Activated T-helper 1 cell treated with anti-CD3 and anti-CD28 coated beads, Interleukin-12 subunit alpha, Interleukin-12 subunit beta, Interleukin-2, Interleukin-4 antibody, amounts not matched to agents 30 ng/mL and 10 ng/mL and 1 ng/mL, durations not matched to agents 14 hours and 24 hours and 36 hours (primary cell): ENCODE measurements at regions of chr21 and their contacts with region 1.

Region 1: GRCh38 chr21:14773777-14774345 is 227.7 kb upstream of the SAMSN1 start:
- DNase-seq: peak; percentile 45
- H3K4me3 Mint-ChIP-seq: no peak overlapping the region
- H3K27ac Mint-ChIP-seq: no peak overlapping the region
- H3K4me1 Mint-ChIP-seq: no peaks in the 10 kb centered on the region
- H3K27me3 Mint-ChIP-seq: peaks cover 2% of the 10 kb centered on the region

Region 2: GRCh38 chr21:14259747-14260146 is 514.1 kb before region 1 on chr21:
- intact Hi-C with region 1: loop called (anchors 10 kb)
- DNase-seq: no peak
- H3K4me3 Mint-ChIP-seq: no peak overlapping the region
- H3K27ac Mint-ChIP-seq: no peak overlapping the region
- H3K4me1 Mint-ChIP-seq: no peaks in the 10 kb centered on the region
- H3K27me3 Mint-ChIP-seq: peaks cover 10% of the 10 kb centered on the region

Region 3: GRCh38 chr21:14403681-14404318 is 370.1 kb before region 1 on chr21:
- intact Hi-C with region 1: loop called (anchors 1 kb)
- DNase-seq: no peak
- H3K4me3 Mint-ChIP-seq: no peak overlapping the region
- H3K27ac Mint-ChIP-seq: no peak overlapping the region
- H3K4me1 Mint-ChIP-seq: peaks cover 5% of the 10 kb centered on the region
- H3K27me3 Mint-ChIP-seq: no peaks in the 10 kb centered on the region